Common myeloid progenitor, CD34-positive (primary cell): ENCODE measurements at regions of chr14 and their contacts with region 1.

Region 1: GRCh38 chr14:49862089-49862673 is 9.6 kb upstream of the NEMF start:
- DNase-seq: peak; percentile 90 to 95 (median 92)
- H3K4me3 ChIP-seq: peak overlapping the region; percentile 78 to 99 (median 87)
- H3K27ac ChIP-seq: peak overlapping the region; percentile 79 to 93
- H3K4me1 ChIP-seq: peaks cover 12 to 37% (median 24%) of the 10 kb centered on the region in 4 experiments
- H3K27me3 ChIP-seq: no peaks in the 10 kb centered on the region

Region 2: GRCh38 chr14:49879683-49880204 is 17.6 kb after region 1 on chr14:
- CTCF ChIA-PET with region 1: interaction called, 12 read pairs
- POLR2A ChIA-PET with region 1: no interaction called
- DNase-seq: peak; percentile 84 to 92 (median 92)
- H3K4me3 ChIP-seq: no peak overlapping the region
- H3K27ac ChIP-seq: no peak overlapping the region
- H3K4me1 ChIP-seq: peaks cover 0 to 16% (median 5%) of the 10 kb centered on the region in 4 experiments
- H3K27me3 ChIP-seq: no peaks in the 10 kb centered on the region

Region 3: DNA sequence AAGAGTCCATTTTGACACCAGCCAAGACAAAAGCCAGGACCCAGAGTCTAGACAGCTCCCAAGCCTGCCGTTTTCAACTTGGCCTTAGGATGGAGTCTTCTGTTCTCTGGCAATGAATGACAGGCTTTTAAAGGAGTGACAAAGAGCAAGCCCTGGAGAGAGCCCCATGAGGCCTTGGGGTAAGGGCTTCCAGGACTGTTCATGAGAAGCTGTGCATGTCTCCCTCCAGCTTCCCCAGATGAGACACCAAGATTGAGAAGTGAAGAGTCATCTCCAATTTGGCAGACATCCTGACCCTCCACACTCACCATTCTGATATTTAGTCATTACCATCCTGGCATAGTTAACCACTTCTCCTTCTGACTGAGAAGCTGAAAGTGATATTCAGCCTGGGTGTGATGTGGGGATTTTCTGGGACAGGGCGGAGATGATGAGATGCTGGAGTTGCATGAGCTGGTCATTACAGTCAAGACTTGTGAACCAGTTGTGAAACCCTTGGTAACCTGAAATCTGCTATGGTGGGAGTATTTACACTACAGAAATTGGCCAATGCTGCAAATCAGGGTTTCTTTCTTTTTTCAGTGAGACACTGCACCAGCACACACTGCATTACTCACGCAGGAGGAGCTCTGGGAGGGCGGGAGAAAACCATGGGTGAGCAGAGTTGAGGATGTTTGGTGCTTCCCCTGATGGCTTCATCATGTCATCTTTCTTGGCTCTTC is 176.4 kb after region 1 on chr14:
- CTCF ChIA-PET with region 1: interaction called, 14 read pairs
- POLR2A ChIA-PET with region 1: no interaction called
- DNase-seq: peak; percentile 77 to 96 (median 95)
- H3K4me3 ChIP-seq: no peak overlapping the region
- H3K27ac ChIP-seq: no peak overlapping the region
- H3K4me1 ChIP-seq: peaks cover 6 to 41% (median 38%) of the 10 kb centered on the region in 4 experiments
- H3K27me3 ChIP-seq: no peaks in the 10 kb centered on the region

Region 4: DNA sequence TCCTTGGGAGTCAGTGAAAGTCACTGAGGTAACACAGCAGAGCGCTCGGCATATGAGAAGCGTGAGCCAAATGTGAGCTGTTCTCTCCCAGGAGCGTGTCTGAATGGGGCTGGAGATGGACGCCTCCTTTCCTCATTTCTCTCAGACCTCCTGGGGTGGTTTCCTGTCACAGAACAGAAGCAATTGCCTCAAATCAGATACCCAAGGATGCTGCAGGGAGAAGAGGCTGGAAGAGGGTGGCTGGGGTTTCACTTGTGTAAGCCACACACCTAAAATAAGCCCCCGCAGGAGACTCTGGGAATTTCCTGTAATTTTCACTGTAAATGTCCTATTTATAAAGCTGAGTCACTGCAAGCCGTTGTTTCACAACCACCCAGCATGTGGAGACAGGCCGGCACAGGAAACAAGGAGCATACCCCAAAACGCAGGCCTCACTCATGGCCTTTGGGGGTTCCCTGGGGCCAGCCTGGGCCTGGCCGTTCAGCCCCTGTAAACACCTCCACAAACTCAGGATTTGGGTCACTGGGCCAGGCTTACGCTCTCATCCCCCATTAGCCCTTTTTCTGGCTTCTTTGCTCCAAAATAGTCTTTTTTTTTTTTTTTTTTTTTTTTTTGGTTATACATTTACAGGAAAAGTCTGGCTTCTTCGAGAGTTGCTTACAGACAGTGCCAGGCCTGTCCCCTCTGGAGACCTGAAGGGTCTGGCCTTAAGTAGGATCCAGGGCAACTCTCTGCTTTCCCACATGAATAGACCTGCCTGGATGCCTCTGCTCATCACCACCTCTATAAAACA is 198.9 kb after region 1 on chr14:
- CTCF ChIA-PET with region 1: interaction called, 20 read pairs
- POLR2A ChIA-PET with region 1: no interaction called
- DNase-seq: peak; percentile 75 to 94 (median 92)
- H3K4me3 ChIP-seq: peak overlapping the region in 4 of 7 experiments; percentile 12 to 46 (median 22)
- H3K27ac ChIP-seq: peak overlapping the region; percentile 16 to 69
- H3K4me1 ChIP-seq: peaks cover 25 to 90% (median 71%) of the 10 kb centered on the region in 4 experiments
- H3K27me3 ChIP-seq: no peaks in the 10 kb centered on the region

Region 5: DNA sequence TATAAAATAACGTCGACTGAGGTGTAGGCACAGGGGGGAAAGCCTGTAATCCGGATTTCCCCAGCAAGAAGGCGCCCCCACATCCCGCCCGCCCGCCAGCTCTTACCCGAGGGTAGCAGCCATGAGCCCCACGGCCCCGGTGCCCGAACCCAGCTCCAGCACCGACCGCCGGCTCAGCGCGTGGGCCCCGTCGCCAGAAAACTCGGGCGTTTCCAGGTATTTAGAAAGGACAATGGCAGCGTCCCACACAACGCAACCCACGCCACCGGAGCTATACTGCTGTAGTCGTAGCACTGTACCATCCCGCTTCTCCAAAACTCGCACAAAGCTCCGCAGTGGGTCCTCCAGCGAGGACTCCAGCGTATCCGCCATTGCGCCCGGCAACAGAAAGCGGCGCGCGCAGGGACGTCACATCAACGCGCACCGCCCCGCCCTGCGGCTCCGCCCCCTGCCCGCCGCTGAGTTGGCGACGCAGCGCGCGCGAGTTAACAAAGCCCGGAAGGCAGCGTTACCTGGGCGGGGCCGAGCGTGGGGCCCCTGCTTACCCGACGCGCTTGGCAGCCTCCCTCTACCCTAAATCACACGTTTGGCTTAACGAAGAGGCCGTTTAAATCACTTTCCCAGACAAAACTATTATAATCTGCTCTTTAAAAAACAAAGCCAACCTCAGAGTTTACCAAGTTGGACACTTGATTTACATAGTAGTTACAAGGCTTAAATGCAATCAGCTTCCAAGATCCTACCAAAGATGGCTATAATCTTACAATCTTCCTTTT is 254.2 kb after region 1 on chr14 and contains the start of gene VCPKMT:
- CTCF ChIA-PET with region 1: interaction called, 37 read pairs
- POLR2A ChIA-PET with region 1: no interaction called
- DNase-seq: peak; percentile 91 to 95 (median 95)
- H3K4me3 ChIP-seq: peak within 1 kb of the TSS; percentile 80 to 97 (median 95)
- H3K27ac ChIP-seq: peak within 1 kb of the TSS; percentile 75 to 91
- H3K4me1 ChIP-seq: peaks cover 5 to 15% (median 11%) of the 10 kb centered on the region in 4 experiments
- H3K27me3 ChIP-seq: no peaks in the 10 kb centered on the region